B cell (primary cell): ENCODE measurements at regions of chr1 and their contacts with region 1.

Region 1: DNA sequence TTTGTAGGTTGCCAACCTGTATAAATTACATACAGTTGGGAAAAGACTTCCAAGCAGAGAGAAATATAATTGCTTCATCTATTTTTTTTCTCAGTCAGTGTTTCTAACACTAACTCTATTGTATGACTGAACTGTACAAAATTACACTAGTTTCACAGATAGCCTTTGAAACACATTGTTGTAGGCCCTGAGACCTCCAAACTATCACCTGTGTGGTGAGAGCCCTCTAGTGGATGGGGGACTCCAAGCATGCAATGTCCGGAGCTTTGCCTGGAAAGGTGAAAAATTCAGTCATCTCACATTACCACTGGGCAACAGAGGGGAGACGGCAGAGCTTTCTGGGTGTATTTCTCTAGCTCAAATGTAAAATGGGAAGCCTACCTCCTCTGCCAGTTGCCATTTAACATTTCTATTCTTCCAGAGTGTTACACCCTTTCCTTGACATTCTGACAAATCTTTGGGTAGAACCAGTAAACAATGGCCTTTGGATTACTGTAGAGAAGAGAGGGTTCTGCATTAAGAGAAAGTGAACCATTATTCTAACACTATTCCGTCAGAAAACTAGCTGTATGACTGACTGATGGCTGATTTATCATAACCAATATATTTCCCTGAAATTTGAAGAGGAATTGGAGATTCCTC is 212.2 kb downstream of the LYPLAL1 start:
- DNase-seq: peak; percentile 50
- ATAC-seq: peak; percentile 61
- H3K4me3 ChIP-seq: no peak overlapping the region
- H3K4me3 Mint-ChIP-seq: no peak overlapping the region
- H3K27ac ChIP-seq: no peak overlapping the region
- H3K27ac Mint-ChIP-seq: no peak overlapping the region
- H3K4me1 ChIP-seq: no peaks in the 10 kb centered on the region
- H3K4me1 Mint-ChIP-seq: no peaks in the 10 kb centered on the region
- H3K27me3 ChIP-seq: no peaks in the 10 kb centered on the region
- H3K27me3 Mint-ChIP-seq: no peaks in the 10 kb centered on the region
- CTCF ChIP-seq: peak; percentile 76

Region 2: DNA sequence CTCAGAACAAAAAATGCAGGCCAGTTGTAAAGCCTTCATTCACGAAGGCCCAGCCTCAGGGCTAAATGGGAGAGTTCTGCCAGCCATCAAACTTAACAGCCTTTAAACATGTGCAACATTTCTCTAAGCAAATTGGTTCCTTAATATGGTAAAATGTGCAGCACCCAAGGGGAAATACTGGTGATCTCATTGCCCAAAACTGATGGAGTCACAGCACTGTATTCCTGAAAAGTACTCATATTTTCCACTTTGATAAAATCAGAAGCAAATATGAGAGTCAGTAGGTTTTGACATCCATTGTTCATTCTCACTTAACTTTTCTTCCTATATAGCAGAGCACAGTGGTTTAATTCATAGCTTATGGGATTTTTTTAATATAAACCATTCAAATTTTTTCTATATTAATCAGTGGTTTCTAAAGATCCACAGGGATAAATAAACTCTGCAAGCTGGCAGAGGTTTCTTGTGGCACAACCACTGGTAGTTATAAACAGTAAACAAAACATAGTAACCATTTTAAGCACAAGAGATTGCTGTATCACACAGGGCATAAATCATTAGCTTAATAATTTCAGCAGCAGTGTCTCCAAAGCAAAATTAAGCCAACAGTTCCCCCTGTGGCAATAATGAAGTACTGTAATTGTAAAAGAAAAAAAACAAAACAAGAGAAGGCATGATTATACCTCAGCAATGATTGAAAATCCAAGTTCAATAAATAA is 319.1 kb before region 1 on chr1:
- CTCF ChIA-PET with region 1: interaction called, 8 read pairs
- POLR2A ChIA-PET with region 1: no interaction called
- intact Hi-C with region 1: loop called (anchors 10 kb)
- DNase-seq: no peak
- ATAC-seq: no peak
- H3K4me3 ChIP-seq: no peak overlapping the region
- H3K4me3 Mint-ChIP-seq: no peak overlapping the region
- H3K27ac ChIP-seq: no peak overlapping the region
- H3K27ac Mint-ChIP-seq: no peak overlapping the region
- H3K4me1 ChIP-seq: no peaks in the 10 kb centered on the region
- H3K4me1 Mint-ChIP-seq: peaks cover 9% of the 10 kb centered on the region
- H3K27me3 ChIP-seq: no peaks in the 10 kb centered on the region
- H3K27me3 Mint-ChIP-seq: no peaks in the 10 kb centered on the region
- CTCF ChIP-seq: peak; percentile 54

Region 3: DNA sequence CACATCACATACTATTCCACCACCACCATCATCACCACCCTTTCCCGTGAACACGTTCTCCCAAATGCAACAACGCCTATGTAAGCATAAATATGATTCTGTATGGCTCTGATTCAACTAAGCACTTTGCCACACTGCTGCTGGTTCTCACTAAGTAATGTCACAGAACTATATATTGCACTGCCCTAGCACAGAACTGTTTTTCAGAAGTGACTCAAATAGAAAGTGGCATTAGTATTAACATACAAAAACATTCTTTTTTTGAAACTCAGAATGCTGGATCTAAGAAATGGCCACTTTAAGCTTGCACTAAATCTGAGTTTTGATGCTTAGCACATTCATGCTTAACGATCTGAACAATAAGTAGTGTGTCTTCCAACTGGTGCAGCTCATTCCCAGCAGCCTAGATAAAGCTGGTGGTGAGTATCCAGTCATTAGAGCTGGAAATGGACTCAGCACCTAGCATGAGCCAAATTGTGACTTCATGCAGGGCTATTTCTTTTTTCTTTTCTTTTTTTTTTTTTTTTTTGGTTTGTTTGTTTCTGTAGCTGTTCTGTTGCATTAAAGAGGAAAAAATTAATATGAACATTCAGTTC is 273.2 kb after region 1 on chr1:
- CTCF ChIA-PET with region 1: no interaction called
- POLR2A ChIA-PET with region 1: no interaction called
- intact Hi-C with region 1: no loop called
- DNase-seq: no peak
- ATAC-seq: no peak
- H3K4me3 ChIP-seq: no peak overlapping the region
- H3K4me3 Mint-ChIP-seq: no peak overlapping the region
- H3K27ac ChIP-seq: no peak overlapping the region
- H3K27ac Mint-ChIP-seq: no peak overlapping the region
- H3K4me1 ChIP-seq: peaks cover 0 to 6% of the 10 kb centered on the region in 2 donors
- H3K4me1 Mint-ChIP-seq: peaks cover 12% of the 10 kb centered on the region
- H3K27me3 ChIP-seq: peaks cover 0 to 11% (median 4%) of the 10 kb centered on the region in 4 experiments
- H3K27me3 Mint-ChIP-seq: peaks cover 45% of the 10 kb centered on the region
- CTCF ChIP-seq: no peak